Activated CD4-positive, alpha-beta T cell treated with anti-CD3 and anti-CD28 coated beads for 36 hours (primary cell): ENCODE measurements at regions of chr20 and their contacts with region 1.

Region 1: GRCh38 chr20:62937366-62938104 is 412 bp upstream of the GID8 start:
- DNase-seq: peak; percentile 99
- ATAC-seq: peak; percentile 90
- H3K4me3 Mint-ChIP-seq: no peak overlapping the region
- H3K27ac Mint-ChIP-seq: peak overlapping the region; percentile 96
- H3K4me1 Mint-ChIP-seq: peaks cover 44% of the 10 kb centered on the region
- H3K27me3 Mint-ChIP-seq: no peaks in the 10 kb centered on the region

Region 2: GRCh38 chr20:62237801-62238571 is 699.5 kb before region 1 on chr20 and contains the start of gene OSBPL2:
- CTCF ChIA-PET with region 1: no interaction called
- POLR2A ChIA-PET with region 1: no interaction called
- intact Hi-C with region 1: loop called in 1 of 2 experiments (anchors 5 kb)
- DNase-seq: peak; percentile 100
- ATAC-seq: peak; percentile 99
- H3K4me3 Mint-ChIP-seq: peak within 1 kb of the TSS; percentile 77
- H3K27ac Mint-ChIP-seq: peak within 1 kb of the TSS; percentile 74
- H3K4me1 Mint-ChIP-seq: peaks cover 34% of the 10 kb centered on the region
- H3K27me3 Mint-ChIP-seq: no peaks in the 10 kb centered on the region
- total RNA-seq, gene OSBPL2: 19.2 to 23.0 TPM

Region 3: DNA sequence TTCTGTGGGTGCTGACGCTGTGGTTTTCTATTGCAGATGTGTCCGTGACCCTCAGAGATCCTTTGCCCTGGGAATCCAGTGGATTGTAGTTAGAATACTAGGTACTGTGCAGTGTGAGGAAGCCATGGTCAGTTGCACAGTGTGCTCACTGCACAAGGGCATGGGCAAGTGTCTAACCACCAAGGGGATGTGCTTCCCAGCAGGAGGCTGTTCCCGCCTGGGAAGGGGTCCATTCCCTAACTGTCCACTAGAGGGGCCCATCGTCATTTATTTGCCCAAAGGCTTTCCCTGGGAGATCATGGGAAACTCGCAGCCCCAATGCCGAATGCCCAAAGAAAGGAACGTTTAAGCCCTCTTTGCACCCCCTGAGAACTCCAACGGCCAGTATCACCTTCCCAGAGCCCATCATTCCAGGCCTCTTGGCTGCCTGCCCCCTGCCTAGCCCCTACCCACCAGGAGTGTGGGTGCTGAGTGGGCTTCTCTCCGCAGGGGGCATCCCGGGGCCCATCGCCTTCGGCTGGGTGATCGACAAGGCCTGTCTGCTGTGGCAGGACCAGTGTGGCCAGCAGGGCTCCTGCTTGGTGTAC is 269.0 kb before region 1 on chr20:
- CTCF ChIA-PET with region 1: no interaction called
- POLR2A ChIA-PET with region 1: no interaction called
- intact Hi-C with region 1: no loop called
- DNase-seq: peak; percentile 45
- ATAC-seq: no peak
- H3K4me3 Mint-ChIP-seq: no peak overlapping the region
- H3K27ac Mint-ChIP-seq: no peak overlapping the region
- H3K4me1 Mint-ChIP-seq: no peaks in the 10 kb centered on the region
- H3K27me3 Mint-ChIP-seq: no peaks in the 10 kb centered on the region

Region 4: GRCh38 chr20:62900052-62900691 is 37.4 kb before region 1 on chr20:
- CTCF ChIA-PET with region 1: interaction called, 9 read pairs
- POLR2A ChIA-PET with region 1: no interaction called
- intact Hi-C with region 1: loop called (anchors 1 kb)
- DNase-seq: peak; percentile 86
- ATAC-seq: peak; percentile 93
- H3K4me3 Mint-ChIP-seq: no peak overlapping the region
- H3K27ac Mint-ChIP-seq: peak overlapping the region; percentile 56
- H3K4me1 Mint-ChIP-seq: peaks cover 38% of the 10 kb centered on the region
- H3K27me3 Mint-ChIP-seq: no peaks in the 10 kb centered on the region

Region 5: DNA sequence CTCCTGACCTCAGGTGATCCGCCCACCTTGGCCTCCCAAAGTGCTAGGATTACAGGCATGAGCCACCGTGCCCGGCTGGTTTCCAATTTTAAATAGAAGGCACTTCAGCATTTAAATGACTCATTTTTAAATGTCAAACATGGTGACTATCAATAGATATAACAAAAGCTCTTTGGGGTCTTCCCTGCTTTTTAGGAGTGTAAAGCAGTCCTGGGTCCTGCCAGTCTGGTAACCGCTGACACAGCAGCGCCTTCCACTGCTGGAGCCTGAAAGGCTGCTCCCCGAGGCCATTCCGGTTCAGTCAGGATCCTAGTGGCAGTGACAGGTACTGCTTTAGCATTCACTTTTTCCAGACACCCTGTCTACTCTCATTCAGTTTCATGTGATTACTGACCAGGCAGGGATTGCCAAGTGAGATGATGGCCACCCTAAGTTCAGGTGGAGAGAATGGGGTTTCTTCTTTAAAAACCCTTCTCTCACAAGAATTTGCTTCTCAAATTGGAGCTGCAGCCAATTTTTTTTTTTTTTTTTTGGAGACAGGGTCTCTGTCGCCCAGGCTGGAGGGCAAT is 16.3 kb before region 1 on chr20:
- CTCF ChIA-PET with region 1: interaction called, 17 read pairs
- POLR2A ChIA-PET with region 1: interaction called, 18 read pairs
- intact Hi-C with region 1: loop called (anchors 1 to 2 kb)
- DNase-seq: peak; percentile 87
- ATAC-seq: peak; percentile 67
- H3K4me3 Mint-ChIP-seq: peak overlapping the region; percentile 13
- H3K27ac Mint-ChIP-seq: peak overlapping the region; percentile 75
- H3K4me1 Mint-ChIP-seq: peaks cover 76% of the 10 kb centered on the region
- H3K27me3 Mint-ChIP-seq: no peaks in the 10 kb centered on the region

Region 6: DNA sequence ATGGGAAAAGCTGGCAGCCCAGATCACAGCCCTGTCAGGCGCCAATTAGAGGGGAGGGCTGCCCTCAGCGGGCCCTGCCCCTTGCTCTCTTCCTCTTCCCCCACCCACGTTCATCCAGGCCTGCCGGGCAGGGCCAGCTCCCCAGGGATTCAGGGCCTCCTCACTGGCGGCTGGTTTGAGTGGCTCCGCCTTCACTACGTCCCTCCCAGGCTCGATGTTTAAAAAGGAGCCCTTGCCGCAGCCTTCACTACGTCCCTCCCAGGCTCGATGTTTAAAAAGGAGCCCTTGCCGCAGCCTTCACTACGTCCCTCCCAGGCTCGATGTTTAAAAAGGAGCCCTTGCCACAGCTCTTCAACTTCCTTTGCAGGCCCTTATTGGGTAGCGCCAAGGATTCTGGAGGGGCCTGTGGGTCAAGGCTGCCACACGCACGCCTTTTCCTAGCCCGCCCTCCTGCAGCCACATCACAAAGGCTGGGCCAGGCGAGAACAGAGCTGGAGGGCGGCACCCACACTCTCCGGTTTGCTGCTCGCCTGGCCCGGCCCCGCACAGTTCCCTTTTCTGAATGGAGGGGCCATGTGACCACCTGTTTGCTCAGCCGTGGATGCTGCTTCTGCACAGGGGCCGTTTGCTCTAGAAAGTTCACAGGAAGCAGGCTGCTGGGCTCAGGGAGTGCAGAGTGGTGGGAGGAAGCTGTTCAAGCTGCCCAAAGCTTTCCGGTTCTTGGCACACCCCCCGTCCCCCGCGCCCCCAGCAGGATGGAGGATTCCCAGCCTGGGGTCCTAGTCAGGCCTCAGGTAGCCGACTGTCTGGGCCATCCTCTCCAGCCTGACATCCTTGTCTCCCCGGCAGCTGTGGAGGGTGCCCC is 16.5 kb after region 1 on chr20:
- CTCF ChIA-PET with region 1: interaction called, 4 read pairs
- POLR2A ChIA-PET with region 1: interaction called, 7 read pairs
- intact Hi-C with region 1: loop called in 1 of 2 experiments (anchors 1 kb)
- DNase-seq: peak; percentile 74
- ATAC-seq: peak; percentile 82
- H3K4me3 Mint-ChIP-seq: peak overlapping the region; percentile 69
- H3K27ac Mint-ChIP-seq: peak overlapping the region; percentile 85
- H3K4me1 Mint-ChIP-seq: peaks cover 25% of the 10 kb centered on the region
- H3K27me3 Mint-ChIP-seq: no peaks in the 10 kb centered on the region

Region 7: GRCh38 chr20:63027922-63028389 is 90.4 kb after region 1 on chr20:
- CTCF ChIA-PET with region 1: no interaction called
- POLR2A ChIA-PET with region 1: no interaction called
- intact Hi-C with region 1: no loop called
- DNase-seq: peak; percentile 59
- ATAC-seq: no peak
- H3K4me3 Mint-ChIP-seq: no peak overlapping the region
- H3K27ac Mint-ChIP-seq: no peak overlapping the region
- H3K4me1 Mint-ChIP-seq: peaks cover 14% of the 10 kb centered on the region
- H3K27me3 Mint-ChIP-seq: peaks cover 17% of the 10 kb centered on the region

Region 8: GRCh38 chr20:63101781-63102719 is 164.5 kb after region 1 on chr20:
- CTCF ChIA-PET with region 1: no interaction called
- POLR2A ChIA-PET with region 1: no interaction called
- intact Hi-C with region 1: loop called in 1 of 2 experiments (anchors 1 kb)
- DNase-seq: peak; percentile 85
- ATAC-seq: peak; percentile 74
- H3K4me3 Mint-ChIP-seq: peak overlapping the region; percentile 77
- H3K27ac Mint-ChIP-seq: peak overlapping the region; percentile 87
- H3K4me1 Mint-ChIP-seq: peaks cover 5% of the 10 kb centered on the region
- H3K27me3 Mint-ChIP-seq: no peaks in the 10 kb centered on the region